Cardiac septum (tissue), 1 donor: ENCODE measurements at regions of chr2 and their contacts with region 1.

Region 1: GRCh38 chr2:237691908-237692600 is 64.7 kb downstream of the LRRFIP1 start:
- DNase-seq: peak; percentile 99

Region 2: GRCh38 chr2:237731663-237732062 is 39.6 kb after region 1 on chr2:
- intact Hi-C with region 1: loop called (anchors 2 kb)
- DNase-seq: no peak